ENCODE measurements at regions of chr18 and their contacts with region 1.

Region 1: DNA sequence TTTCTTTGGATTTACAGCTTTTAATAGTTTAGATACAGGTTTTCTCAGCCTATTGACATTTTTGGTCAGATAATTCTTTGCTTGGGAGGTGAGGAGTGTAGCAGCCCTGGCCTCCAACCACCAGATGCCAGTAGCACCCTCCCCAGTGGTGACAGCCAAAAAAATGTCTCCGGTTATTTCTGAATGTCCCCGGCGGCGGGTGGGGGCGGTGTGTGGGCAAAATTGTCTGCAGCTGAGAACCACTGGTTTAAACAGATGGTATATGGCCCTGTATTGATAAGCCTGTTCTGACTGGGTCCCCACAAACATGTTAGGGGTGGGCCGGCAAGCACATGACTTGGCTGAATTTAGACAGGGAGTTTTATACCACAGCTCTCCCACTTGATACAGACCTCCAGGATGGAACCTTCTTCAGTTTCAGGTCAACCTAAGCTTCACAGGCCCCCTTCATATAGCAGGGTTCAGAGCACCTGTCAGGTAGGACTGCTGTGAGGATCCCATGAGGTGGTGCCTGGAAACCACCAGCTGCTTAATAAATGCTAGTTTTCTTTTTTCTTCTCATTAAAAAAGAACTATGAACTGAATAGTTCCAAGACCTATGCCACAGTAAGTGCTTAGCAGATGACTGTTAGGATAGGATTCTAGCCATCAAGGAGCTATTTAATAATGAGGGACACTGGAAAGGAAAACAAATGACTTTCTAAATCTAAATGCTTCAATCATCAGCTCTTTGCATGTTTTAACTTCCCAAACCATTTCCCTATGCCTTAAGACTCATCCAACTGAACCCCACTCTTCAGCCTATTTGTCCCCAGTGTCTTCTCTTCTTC is 18.1 kb downstream of the LPIN2 start:
- DNase-seq: peak; percentile 79
- ATAC-seq: peak; percentile 77
- H3K4me3 Mint-ChIP-seq: peak overlapping the region; percentile 46
- H3K27ac Mint-ChIP-seq: peak overlapping the region; percentile 57
- H3K4me1 Mint-ChIP-seq: peaks cover 77% of the 10 kb centered on the region
- H3K27me3 Mint-ChIP-seq: no peaks in the 10 kb centered on the region

Region 2: GRCh38 chr18:2948038-2948437 is 46.8 kb before region 1 on chr18:
- CTCF ChIA-PET with region 1: interaction called, 11 read pairs
- POLR2A ChIA-PET with region 1: no interaction called
- DNase-seq: no peak
- ATAC-seq: no peak
- H3K4me3 Mint-ChIP-seq: no peak overlapping the region
- H3K27ac Mint-ChIP-seq: no peak overlapping the region
- H3K4me1 Mint-ChIP-seq: peaks cover 30% of the 10 kb centered on the region
- H3K27me3 Mint-ChIP-seq: no peaks in the 10 kb centered on the region

Region 3: DNA sequence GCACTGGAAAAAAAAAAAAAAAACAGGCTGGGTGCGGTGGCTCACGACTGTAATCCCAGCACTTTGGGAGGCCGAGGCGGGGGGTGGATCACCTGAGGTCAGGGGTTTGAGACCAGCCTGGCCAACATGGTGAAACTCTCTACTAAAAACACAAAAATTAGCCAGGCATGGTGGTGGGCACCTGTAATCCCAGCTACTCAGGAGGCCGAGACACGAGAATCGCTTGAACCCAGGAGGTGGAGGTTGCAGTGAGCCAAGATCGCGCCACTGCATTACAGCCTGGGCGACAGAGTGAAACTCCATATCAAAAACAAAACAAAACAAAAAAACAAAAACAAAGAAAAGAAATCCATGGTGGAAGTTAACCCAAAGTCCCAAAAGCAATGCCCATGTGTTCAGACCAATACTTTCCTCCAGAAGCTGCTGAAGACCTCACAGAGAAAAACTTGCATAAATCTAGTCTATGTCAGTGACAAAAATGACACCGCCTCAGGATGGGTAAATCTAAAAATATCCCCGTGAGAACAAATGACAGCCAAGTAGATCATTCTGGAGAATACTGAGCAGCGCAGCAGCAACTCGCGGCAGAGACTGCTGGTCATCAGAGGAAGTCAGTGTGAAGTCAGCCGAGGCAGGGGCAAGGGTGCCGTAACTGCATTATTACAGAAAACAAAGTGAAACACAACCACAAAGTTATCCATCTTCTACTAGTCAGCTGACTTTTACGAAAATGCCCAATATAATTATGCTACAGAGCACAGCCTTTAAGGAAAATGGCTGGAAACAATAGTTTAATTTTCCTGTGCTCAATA is 22.9 kb before region 1 on chr18:
- CTCF ChIA-PET with region 1: interaction called, 12 read pairs
- POLR2A ChIA-PET with region 1: interaction called, 3 read pairs
- DNase-seq: peak; percentile 86
- ATAC-seq: peak; percentile 75
- H3K4me3 Mint-ChIP-seq: peak overlapping the region; percentile 76
- H3K27ac Mint-ChIP-seq: peak overlapping the region; percentile 96
- H3K4me1 Mint-ChIP-seq: peaks cover 91% of the 10 kb centered on the region
- H3K27me3 Mint-ChIP-seq: no peaks in the 10 kb centered on the region

Region 4: DNA sequence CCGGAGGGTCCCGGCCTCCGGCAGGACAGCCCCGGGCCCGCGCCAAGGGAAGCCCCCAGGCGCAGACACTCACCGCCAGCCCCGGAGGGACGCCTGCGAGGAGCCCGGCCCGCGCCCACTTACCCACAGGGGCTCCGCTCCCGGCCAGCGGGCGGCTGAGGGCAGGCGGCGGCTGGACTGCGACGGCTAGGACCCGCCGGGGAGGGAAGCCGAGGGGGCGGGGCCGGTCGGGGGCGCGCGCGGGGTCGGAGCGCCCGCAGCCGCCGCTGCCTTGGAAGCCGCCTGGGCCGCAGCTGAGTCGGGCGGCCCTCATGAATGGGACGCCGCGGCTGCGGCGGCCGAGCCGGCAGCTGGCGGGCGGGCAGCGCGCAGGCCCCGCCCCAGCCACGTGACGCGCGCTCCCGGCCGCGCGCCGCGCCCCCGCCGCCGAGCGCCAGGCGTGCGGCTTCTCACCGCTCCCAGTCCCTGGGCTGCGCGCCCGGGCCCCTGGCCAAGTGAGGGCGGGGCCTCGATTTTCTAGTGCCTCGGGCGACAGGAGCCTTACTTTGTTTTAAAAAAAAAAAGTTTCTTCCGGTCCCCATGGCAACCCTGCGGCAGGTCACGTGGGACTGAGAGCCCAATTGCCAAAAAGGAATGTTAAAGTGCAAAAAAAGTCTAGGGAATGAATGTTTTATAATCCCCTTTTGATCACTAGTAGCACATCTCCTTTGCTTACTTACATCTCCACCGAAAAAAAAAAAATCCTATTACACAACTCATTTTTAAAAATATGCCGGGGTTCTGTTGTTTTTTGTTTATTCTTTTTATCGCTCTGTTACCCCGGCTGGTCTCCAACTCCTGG is 18.4 kb after region 1 on chr18 and contains the start of gene LPIN2:
- CTCF ChIA-PET with region 1: interaction called, 25 read pairs
- POLR2A ChIA-PET with region 1: interaction called, 4 read pairs
- DNase-seq: peak; percentile 97
- ATAC-seq: peak; percentile 93
- H3K4me3 Mint-ChIP-seq: peak within 1 kb of the TSS; percentile 87
- H3K27ac Mint-ChIP-seq: peak within 1 kb of the TSS; percentile 90
- H3K4me1 Mint-ChIP-seq: peaks cover 66% of the 10 kb centered on the region
- H3K27me3 Mint-ChIP-seq: no peaks in the 10 kb centered on the region
- total RNA-seq, gene LPIN2: 77.5 TPM

Region 5: GRCh38 chr18:3129053-3129864 is 134.4 kb after region 1 on chr18:
- CTCF ChIA-PET with region 1: interaction called, 86 read pairs
- POLR2A ChIA-PET with region 1: interaction called, 4 read pairs
- DNase-seq: peak; percentile 89
- ATAC-seq: peak; percentile 100
- H3K4me3 Mint-ChIP-seq: no peak overlapping the region
- H3K27ac Mint-ChIP-seq: no peak overlapping the region
- H3K4me1 Mint-ChIP-seq: peaks cover 10% of the 10 kb centered on the region
- H3K27me3 Mint-ChIP-seq: no peaks in the 10 kb centered on the region